ENCODE measurements at regions of chr15 and their contacts with region 1.

Region 1: DNA sequence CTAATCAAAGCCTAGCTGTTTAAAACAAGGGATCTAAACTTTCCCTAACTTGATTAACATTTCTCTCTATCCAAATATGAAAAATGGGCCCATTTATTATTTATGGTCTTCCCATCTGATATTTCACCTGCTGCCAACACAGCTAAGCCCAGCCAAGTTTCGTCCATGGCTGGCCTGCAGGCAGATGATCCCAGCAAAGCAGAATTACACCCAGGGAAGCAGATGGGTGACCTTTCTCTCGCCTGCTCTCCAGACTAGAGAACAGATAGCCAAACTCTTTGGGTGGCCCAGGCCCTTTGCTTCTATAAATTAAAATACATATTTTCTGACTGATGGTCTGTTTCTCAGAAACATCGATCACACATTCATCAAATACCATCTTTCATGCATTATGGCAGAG is 1038.8 kb downstream of the AGBL1 start:
- DNase-seq: no peak
- H3K4me3 ChIP-seq: no peak overlapping the region
- H3K27ac ChIP-seq: no peak overlapping the region
- H3K4me1 ChIP-seq: no peaks in the 10 kb centered on the region
- H3K27me3 ChIP-seq: no peaks in the 10 kb centered on the region
- CTCF ChIP-seq: no peak

Region 2: DNA sequence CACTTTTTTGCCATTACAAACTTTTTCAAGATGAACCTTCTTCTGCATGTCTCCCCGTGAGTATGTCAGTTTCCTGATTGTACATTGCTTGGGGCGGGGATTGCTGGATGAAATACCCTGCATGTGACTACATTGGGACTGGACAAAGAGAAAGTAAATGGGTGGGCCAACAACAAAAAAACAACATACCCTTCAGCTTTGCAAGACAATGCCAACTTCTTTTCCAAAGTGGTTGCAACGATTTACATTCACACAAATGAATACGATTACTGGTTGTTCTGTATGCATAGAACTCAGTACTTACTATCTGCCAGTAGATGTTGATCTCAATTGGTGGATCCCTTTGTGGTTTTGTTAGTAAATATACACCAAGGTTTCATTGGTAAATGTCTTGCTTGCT is 130.4 kb before region 1 on chr15:
- intact Hi-C with region 1: no loop called
- DNase-seq: no peak
- H3K4me3 ChIP-seq: no peak overlapping the region
- H3K27ac ChIP-seq: no peak overlapping the region
- H3K4me1 ChIP-seq: no peaks in the 10 kb centered on the region
- H3K27me3 ChIP-seq: no peaks in the 10 kb centered on the region
- CTCF ChIP-seq: no peak

Region 3: DNA sequence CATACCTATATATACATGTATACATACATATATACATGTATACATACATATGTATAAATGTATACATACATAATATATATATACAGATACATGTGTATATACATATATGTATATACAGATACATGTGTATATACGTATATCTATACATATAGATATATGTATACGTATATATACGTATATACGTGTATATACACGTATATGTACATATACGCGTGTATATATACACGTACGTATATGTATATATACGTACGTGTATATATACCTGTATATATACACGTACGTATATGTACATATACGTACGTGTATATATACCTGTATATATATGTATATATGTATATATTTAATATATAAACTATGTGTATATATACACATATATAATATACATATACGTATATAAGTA is 83.5 kb before region 1 on chr15:
- intact Hi-C with region 1: no loop called
- DNase-seq: no peak
- H3K4me3 ChIP-seq: no peak overlapping the region
- H3K27ac ChIP-seq: no peak overlapping the region
- H3K4me1 ChIP-seq: no peaks in the 10 kb centered on the region
- H3K27me3 ChIP-seq: no peaks in the 10 kb centered on the region
- CTCF ChIP-seq: no peak

Region 4: GRCh38 chr15:87045403-87046080 is 72.9 kb before region 1 on chr15:
- intact Hi-C with region 1: loop called (anchors 10 kb)
- DNase-seq: no peak
- H3K4me3 ChIP-seq: no peak overlapping the region
- H3K27ac ChIP-seq: no peak overlapping the region
- H3K4me1 ChIP-seq: no peaks in the 10 kb centered on the region
- H3K27me3 ChIP-seq: no peaks in the 10 kb centered on the region
- CTCF ChIP-seq: no peak

Measured in colonic mucosa (tissue), 4 donors.